Activated B cell treated with CpG ODN at 0.5 μM for 24 hours (primary cell): ENCODE measurements at regions of chr2 and their contacts with region 1.

Region 1: GRCh38 chr2:42792583-42793333 is at the start of gene HAAO:
- DNase-seq: peak; percentile 59
- ATAC-seq: peak; percentile 59
- H3K4me3 Mint-ChIP-seq: peak within 1 kb of the TSS; percentile 92
- H3K27ac Mint-ChIP-seq: peak within 1 kb of the TSS; percentile 93
- H3K4me1 Mint-ChIP-seq: peaks cover 47% of the 10 kb centered on the region
- H3K27me3 Mint-ChIP-seq: no peaks in the 10 kb centered on the region
- CTCF ChIP-seq: no peak
- total RNA-seq, gene HAAO: 11.4 TPM in 2 replicates

Region 2: GRCh38 chr2:42568401-42569115 is 224.2 kb before region 1 on chr2 and contains the start of gene MTA3:
- CTCF ChIA-PET with region 1: no interaction called
- POLR2A ChIA-PET with region 1: no interaction called
- intact Hi-C with region 1: loop called (anchors 10 kb)
- DNase-seq: peak; percentile 62
- ATAC-seq: peak; percentile 69
- H3K4me3 Mint-ChIP-seq: peak within 1 kb of the TSS; percentile 87
- H3K27ac Mint-ChIP-seq: peak within 1 kb of the TSS; percentile 70
- H3K4me1 Mint-ChIP-seq: peaks cover 30% of the 10 kb centered on the region
- H3K27me3 Mint-ChIP-seq: no peaks in the 10 kb centered on the region
- CTCF ChIP-seq: no peak
- total RNA-seq, gene MTA3: 26.2 and 26.8 TPM in 2 replicates

Region 3: GRCh38 chr2:42743413-42743972 is 49.3 kb before region 1 on chr2:
- CTCF ChIA-PET with region 1: no interaction called
- POLR2A ChIA-PET with region 1: no interaction called
- intact Hi-C with region 1: no loop called
- DNase-seq: no peak
- ATAC-seq: no peak
- H3K4me3 Mint-ChIP-seq: no peak overlapping the region
- H3K27ac Mint-ChIP-seq: no peak overlapping the region
- H3K4me1 Mint-ChIP-seq: peaks cover 5% of the 10 kb centered on the region
- H3K27me3 Mint-ChIP-seq: no peaks in the 10 kb centered on the region
- CTCF ChIP-seq: no peak

Region 4: DNA sequence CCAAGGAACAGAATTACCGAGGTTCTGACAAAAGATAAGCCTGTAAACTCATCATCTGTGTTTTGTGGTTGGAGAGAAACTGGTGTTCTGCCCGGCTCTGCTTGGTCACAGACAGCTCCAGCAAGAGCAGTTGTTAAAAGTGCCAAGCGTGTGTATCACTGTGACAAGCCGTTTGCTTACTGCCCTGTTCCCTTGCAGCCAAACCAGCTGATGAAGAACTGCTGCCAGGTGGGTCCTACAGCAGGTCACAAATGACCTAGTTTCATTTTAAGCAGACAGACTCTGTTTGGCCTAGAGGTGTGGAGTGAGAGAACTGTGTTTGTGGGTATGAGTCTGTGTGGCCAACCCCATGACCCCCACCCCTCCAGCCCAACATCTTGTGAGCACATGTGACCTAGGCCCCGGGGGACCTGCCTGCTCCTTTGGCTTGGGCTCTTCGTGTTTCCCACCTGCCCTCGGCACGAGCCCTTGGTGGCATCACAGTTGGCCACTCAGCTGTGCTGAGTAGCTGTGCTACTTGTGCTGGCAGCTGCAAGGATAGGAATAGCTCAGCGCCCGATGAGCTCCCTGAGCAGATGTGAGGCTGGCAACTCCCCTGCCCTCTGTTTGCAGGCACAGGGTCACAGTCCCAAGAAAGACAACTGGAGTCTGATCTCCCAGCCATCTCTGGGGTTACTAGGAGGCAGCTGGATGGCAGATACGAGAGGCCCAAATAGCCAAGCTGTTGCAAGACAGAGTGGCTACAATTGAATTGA is 38.6 kb before region 1 on chr2:
- CTCF ChIA-PET with region 1: interaction called, 3 read pairs
- POLR2A ChIA-PET with region 1: interaction called, 9 read pairs
- intact Hi-C with region 1: loop called (anchors 1 kb)
- DNase-seq: peak; percentile 49
- ATAC-seq: peak; percentile 72
- H3K4me3 Mint-ChIP-seq: peak overlapping the region; percentile 39
- H3K27ac Mint-ChIP-seq: peak overlapping the region; percentile 75
- H3K4me1 Mint-ChIP-seq: peaks cover 47% of the 10 kb centered on the region
- H3K27me3 Mint-ChIP-seq: no peaks in the 10 kb centered on the region
- CTCF ChIP-seq: no peak

Region 5: GRCh38 chr2:42835577-42836371 is 43.0 kb after region 1 on chr2:
- CTCF ChIA-PET with region 1: no interaction called
- POLR2A ChIA-PET with region 1: no interaction called
- intact Hi-C with region 1: no loop called
- DNase-seq: no peak
- ATAC-seq: no peak
- H3K4me3 Mint-ChIP-seq: no peak overlapping the region
- H3K27ac Mint-ChIP-seq: no peak overlapping the region
- H3K4me1 Mint-ChIP-seq: no peaks in the 10 kb centered on the region
- H3K27me3 Mint-ChIP-seq: no peaks in the 10 kb centered on the region
- CTCF ChIP-seq: no peak

Region 6: GRCh38 chr2:43125090-43125998 is 332.6 kb after region 1 on chr2:
- CTCF ChIA-PET with region 1: no interaction called
- POLR2A ChIA-PET with region 1: interaction called, 11 read pairs
- intact Hi-C with region 1: no loop called
- DNase-seq: no peak
- ATAC-seq: no peak
- H3K4me3 Mint-ChIP-seq: no peak overlapping the region
- H3K27ac Mint-ChIP-seq: no peak overlapping the region
- H3K4me1 Mint-ChIP-seq: peaks cover 66% of the 10 kb centered on the region
- H3K27me3 Mint-ChIP-seq: no peaks in the 10 kb centered on the region
- CTCF ChIP-seq: no peak

Region 7: DNA sequence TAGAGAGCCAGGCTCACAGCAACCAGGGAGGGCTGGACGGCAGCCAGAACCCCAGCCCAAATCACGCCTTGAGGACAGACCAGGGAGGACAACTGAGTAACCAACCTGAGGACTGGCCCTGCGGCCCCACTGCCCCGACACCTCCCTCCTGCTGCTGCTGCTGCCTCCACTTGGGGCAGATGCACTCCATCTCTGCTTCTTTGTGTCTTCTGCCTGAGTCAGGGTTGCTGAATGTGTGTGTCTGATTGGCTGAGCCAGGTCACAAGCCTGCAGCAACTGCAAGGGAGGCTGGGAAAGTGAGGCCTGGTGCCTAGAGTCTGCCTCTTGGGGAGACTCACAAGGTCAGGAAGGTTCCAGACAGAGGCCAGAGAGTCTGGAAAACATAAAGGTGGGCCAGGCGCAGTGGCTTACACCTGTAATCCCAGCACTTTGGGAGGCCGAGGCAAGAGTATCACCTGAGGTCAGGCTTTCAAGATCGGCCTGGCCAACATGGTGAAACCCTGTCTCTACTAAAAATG is 350.2 kb after region 1 on chr2:
- CTCF ChIA-PET with region 1: no interaction called
- POLR2A ChIA-PET with region 1: no interaction called
- intact Hi-C with region 1: no loop called
- DNase-seq: no peak
- ATAC-seq: no peak
- H3K4me3 Mint-ChIP-seq: no peak overlapping the region
- H3K27ac Mint-ChIP-seq: no peak overlapping the region
- H3K4me1 Mint-ChIP-seq: peaks cover 12% of the 10 kb centered on the region
- H3K27me3 Mint-ChIP-seq: no peaks in the 10 kb centered on the region
- CTCF ChIP-seq: no peak